Activated naive CD4-positive, alpha-beta T cell treated with anti-CD3 and anti-CD28 coated beads for 36 hours (primary cell): ENCODE measurements at regions of chr17 and their contacts with region 1.

Region 1: DNA sequence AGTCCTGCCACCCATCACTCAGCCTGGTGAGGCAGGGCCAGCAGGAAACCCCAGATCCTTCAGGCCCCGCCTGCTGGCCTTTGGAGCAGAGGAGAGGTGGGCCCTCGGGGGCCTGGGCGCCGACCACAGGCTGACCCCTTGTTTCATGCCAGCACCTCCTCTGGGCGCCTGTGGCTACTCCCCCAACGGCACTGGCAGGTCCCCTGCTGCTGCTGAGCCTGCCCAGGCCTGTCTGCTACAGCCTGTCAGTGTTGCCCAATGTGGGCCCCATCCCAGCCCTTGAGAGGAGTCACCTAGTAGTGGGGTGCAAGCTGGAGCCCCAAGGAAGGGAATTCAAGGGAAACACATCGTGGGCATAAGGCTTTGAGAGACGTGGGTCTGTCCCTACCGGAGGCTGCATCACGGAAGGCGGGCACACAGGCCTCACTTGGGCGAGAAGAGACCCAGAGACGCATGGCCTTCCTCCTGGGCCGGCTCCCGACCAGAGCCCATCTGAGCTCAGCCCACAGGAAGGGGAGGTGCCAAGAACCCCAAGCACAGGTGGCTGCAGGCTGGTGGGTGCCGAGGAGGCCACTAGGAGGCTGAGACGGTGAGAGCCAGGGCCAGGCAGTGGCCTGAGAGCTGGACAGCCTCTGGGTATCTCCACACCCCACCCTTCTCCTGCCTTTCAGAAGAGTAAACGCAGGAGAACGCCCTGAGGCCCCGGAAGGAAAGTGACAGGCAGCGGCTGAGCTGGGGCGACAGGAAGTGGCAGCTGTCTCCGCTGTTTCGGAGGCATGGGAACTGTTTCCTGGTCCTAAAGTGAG is 8.0 kb upstream of the FASN start:
- DNase-seq: peak; percentile 72
- H3K4me3 Mint-ChIP-seq: peak overlapping the region; percentile 80
- H3K27ac Mint-ChIP-seq: peak overlapping the region; percentile 97
- H3K4me1 Mint-ChIP-seq: peaks cover 36% of the 10 kb centered on the region
- H3K27me3 Mint-ChIP-seq: no peaks in the 10 kb centered on the region

Region 2: DNA sequence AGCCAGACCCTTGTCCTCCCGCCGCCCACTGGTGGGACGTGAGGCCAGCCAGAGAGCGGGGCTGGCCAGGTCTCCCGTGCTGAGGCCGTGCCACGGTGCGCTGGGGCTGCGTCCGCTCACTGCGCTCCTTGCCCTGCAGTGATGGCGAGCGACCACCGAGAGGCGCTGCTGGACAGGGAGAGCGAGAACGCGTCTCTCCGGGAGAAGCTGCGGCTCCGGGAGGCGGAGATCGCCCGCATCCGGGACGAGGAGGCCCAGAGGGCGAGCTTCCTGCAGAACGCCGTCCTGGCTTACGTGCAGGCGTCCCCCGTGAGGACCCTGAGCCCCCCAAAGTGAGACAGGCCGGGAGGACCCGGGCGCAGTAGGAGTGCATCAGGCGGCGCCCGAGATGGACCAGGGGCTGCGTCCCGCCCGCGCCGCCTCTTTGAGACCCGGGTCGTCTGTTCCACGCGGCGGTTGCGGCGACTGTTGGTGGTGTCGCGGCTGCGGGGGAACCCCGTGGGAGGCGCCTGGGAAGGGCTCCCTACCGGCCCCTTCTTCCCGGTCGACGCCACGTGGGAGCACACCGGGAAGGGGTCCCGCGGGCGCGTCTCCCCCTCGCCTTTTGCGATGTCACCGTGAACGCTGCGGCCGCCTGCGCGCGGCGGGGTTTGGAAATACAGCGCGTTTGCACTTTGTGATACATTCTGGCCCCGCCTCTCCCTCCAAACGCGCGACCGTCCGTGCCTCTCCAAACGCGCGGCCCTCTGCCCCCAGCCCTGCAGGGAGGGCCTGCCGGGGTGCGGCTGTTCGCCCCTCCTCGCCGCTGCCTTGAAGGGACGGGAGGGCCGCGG is 75.4 kb before region 1 on chr17:
- CTCF ChIA-PET with region 1: interaction called, 13 read pairs
- intact Hi-C with region 1: no loop called
- DNase-seq: peak; percentile 90
- H3K4me3 Mint-ChIP-seq: peak overlapping the region; percentile 76
- H3K27ac Mint-ChIP-seq: no peak overlapping the region
- H3K4me1 Mint-ChIP-seq: peaks cover 8% of the 10 kb centered on the region
- H3K27me3 Mint-ChIP-seq: no peaks in the 10 kb centered on the region

Region 3: DNA sequence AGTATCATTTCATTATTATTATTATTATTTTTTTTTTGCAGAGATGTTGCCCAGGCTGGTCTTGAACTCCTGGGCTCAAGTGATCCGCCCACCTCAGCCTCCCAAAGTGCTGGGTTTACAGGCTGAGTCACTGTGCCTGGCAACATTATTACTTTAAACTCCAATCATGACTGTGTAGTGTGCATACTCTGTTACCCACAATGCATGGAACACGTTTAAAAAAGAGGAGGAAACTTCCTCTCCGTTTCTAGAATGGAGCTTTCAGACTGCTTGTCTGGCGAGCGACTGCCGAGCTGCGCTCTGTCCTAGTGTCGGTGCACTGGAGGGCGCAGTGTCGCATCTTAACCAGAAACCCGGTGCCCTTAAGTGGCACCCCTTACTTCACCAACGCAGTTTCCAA is 14.1 kb after region 1 on chr17:
- CTCF ChIA-PET with region 1: interaction called, 5 read pairs
- intact Hi-C with region 1: loop called (anchors 1 kb)
- DNase-seq: peak; percentile 68
- H3K4me3 Mint-ChIP-seq: peak overlapping the region; percentile 46
- H3K27ac Mint-ChIP-seq: peak overlapping the region; percentile 90
- H3K4me1 Mint-ChIP-seq: peaks cover 47% of the 10 kb centered on the region
- H3K27me3 Mint-ChIP-seq: no peaks in the 10 kb centered on the region

Region 4: DNA sequence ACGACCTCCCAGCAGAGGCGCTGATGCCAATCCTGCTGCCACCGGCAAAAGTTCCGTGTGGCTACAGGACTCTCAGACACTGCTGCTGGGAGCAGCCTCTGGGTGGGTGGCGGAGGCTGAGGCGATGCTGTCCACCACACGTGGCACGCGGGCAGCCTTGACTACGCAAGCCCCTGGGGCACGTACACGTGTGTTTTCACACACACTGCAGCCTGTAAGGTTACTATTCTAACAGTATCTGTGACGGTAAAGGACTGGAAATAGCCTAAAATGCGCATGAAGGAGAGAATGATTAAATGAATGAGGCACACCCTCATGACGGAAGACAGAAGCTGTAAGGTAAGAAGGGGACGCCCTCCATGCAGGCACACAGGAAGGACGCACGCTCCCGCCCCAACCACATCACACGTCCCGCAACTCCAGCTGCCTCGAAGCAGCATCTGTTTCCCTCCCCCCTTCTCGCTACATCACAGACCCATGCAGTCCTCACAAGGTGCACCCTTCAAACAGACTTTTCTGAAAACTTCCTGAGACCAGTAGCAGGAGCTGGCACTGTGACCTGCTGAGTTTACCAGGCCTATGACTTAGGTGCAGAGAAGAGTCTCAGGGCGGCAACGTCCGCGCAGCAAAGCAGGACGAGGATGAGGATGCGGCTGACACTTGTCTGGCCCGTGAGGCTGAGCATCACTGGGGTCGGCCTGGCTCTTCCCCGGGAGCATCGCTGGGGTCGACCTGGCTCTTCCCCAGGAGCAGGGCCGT is 20.6 kb after region 1 on chr17:
- CTCF ChIA-PET with region 1: interaction called, 3 read pairs
- intact Hi-C with region 1: loop called (anchors 1 kb)
- DNase-seq: peak; percentile 95
- H3K4me3 Mint-ChIP-seq: peak overlapping the region; percentile 71
- H3K27ac Mint-ChIP-seq: peak overlapping the region; percentile 95
- H3K4me1 Mint-ChIP-seq: peaks cover 65% of the 10 kb centered on the region
- H3K27me3 Mint-ChIP-seq: no peaks in the 10 kb centered on the region

Region 5: GRCh38 chr17:82153745-82154375 is 47.8 kb after region 1 on chr17:
- CTCF ChIA-PET with region 1: interaction called, 11 read pairs
- intact Hi-C with region 1: no loop called
- DNase-seq: peak; percentile 88
- H3K4me3 Mint-ChIP-seq: no peak overlapping the region
- H3K27ac Mint-ChIP-seq: no peak overlapping the region
- H3K4me1 Mint-ChIP-seq: peaks cover 7% of the 10 kb centered on the region
- H3K27me3 Mint-ChIP-seq: no peaks in the 10 kb centered on the region